IMR-90 (cell line): ENCODE measurements at regions of chr11 and their contacts with region 1.

Region 1: GRCh38 chr11:17354601-17354991 is 3.0 kb downstream of the NCR3LG1 start:
- DNase-seq: peak; percentile 79
- ATAC-seq: no peak; the same call in 1 of the 2 replicates
- H3K4me3 ChIP-seq: no peak overlapping the region
- H3K27ac ChIP-seq: no peak overlapping the region
- H3K4me1 ChIP-seq: peaks cover 2% of the 10 kb centered on the region
- H3K27me3 ChIP-seq: no peaks in the 10 kb centered on the region
- CTCF ChIP-seq: peak; percentile 72
- POLR2A ChIP-seq: no peak
- RAD21 ChIP-seq: peak; percentile 48

Region 2: DNA sequence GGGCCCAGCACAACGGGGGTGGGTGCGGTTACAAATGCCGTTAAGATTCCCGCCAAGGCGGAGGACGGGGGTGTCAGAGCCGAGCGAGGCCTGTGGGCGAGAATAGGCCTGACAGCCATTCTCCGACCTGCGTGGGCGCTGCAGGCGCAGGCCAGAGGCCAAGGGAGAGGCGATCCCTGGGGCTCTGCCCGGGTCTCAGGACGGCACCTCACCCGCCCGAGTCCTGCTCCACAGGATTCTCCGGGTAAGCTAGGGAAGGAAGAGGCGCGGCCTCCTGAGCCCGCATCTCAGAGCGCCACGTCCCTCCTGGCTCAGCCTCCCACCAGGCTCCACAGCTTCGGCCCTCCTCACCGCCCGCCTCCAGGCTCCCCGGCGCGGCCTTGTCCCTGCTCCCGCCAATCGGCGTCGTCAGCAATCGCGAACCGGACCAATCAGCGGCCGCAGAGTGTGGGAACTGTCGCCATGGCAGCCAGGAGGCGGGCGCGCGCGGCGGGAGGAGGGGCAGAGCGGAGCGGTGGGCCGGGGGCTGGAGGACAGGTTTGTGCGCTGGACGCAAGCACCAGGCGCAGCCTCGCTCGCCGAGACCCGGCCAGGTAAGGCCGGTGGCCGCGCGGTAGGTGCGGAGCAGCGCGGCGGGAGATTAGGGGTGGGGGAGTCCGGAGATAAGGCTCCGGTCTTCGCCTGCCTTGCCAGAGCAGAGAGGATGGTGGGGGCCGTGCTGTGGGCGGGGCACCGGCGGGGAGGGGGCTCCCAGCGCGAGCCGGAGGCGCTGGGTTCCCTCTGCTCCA is 78.2 kb before region 1 on chr11 and contains the start of gene NUCB2:
- CTCF ChIA-PET with region 1: interaction called, 7 read pairs
- POLR2A ChIA-PET with region 1: no interaction called
- dilution Hi-C with region 1: no loop called
- in situ Hi-C with region 1: no loop called
- intact Hi-C with region 1: loop called (anchors 5 kb)
- DNase-seq: peak; percentile 93
- ATAC-seq: peak; percentile 97
- H3K4me3 ChIP-seq: peak within 1 kb of the TSS; percentile 79
- H3K27ac ChIP-seq: peak within 1 kb of the TSS; percentile 77
- H3K4me1 ChIP-seq: peaks cover 2% of the 10 kb centered on the region; the same call in 1 of the 2 replicates
- H3K27me3 ChIP-seq: no peaks in the 10 kb centered on the region
- CTCF ChIP-seq: no peak
- POLR2A ChIP-seq: peak; percentile 72
- RAD21 ChIP-seq: 0 out of 2 replicates have a peak, but pooled peaks have one; percentile 5
- total RNA-seq, gene NUCB2: 52.7 and 83.0 TPM in 2 replicates

Region 3: DNA sequence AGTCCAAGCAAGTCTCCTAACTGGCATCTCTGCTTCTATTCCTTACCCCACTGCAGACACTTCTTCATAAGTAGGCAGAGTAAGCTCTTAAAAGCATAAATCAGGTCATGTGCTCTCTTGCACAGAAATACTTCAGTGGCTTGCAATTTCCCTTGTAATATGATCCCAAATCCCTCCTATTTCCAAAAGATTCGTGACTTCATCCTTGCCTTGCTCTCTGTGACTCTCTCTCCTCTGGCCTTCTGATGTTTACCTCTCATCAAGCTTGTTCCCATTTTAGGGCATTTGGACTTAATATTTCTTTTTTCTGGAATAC is 40.4 kb before region 1 on chr11:
- CTCF ChIA-PET with region 1: no interaction called
- POLR2A ChIA-PET with region 1: no interaction called
- dilution Hi-C with region 1: no loop called
- in situ Hi-C with region 1: no loop called
- intact Hi-C with region 1: loop called (anchors 2 kb)
- DNase-seq: peak; percentile 94
- ATAC-seq: peak; percentile 93
- H3K4me3 ChIP-seq: no peak overlapping the region
- H3K27ac ChIP-seq: peak overlapping the region; percentile 77; the same call in 1 of the 2 replicates
- H3K4me1 ChIP-seq: peaks cover 10% of the 10 kb centered on the region
- H3K27me3 ChIP-seq: no peaks in the 10 kb centered on the region
- CTCF ChIP-seq: no peak
- POLR2A ChIP-seq: no peak
- RAD21 ChIP-seq: no peak; the same call in 1 of the 2 replicates

Region 4: GRCh38 chr11:18071098-18071705 is 716.6 kb after region 1 on chr11:
- CTCF ChIA-PET with region 1: no interaction called
- POLR2A ChIA-PET with region 1: no interaction called
- dilution Hi-C with region 1: no loop called
- in situ Hi-C with region 1: no loop called
- intact Hi-C with region 1: no loop called
- DNase-seq: peak; percentile 81
- ATAC-seq: peak; percentile 69
- H3K4me3 ChIP-seq: no peak overlapping the region
- H3K27ac ChIP-seq: peak overlapping the region; percentile 100; the same call in 1 of the 2 replicates
- H3K4me1 ChIP-seq: peaks cover 6% of the 10 kb centered on the region; the same call in 1 of the 2 replicates
- H3K27me3 ChIP-seq: no peaks in the 10 kb centered on the region
- CTCF ChIP-seq: no peak
- POLR2A ChIP-seq: no peak
- RAD21 ChIP-seq: no peak